ENCODE measurements at regions of chr2 and their contacts with region 1.

Region 1: DNA sequence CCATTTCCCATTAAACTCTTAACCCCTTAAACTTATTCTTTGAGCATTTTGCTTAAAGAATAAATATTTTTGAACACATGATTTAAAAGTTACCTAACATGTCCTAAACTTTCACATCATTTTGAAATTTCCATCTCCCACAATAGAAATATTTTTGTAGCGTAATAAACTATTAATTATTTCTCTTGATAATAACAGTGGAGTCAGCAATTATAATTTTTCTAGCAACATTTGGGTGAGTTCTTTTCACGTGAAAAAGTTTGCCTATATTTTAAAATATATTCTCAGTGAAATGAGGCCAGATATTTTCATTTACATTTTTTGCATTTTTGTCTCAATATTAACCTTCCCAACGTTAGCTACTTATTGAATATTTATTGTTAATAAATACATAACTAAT is 320.4 kb upstream of the CRIM1 start:
- DNase-seq: no peak
- H3K4me3 ChIP-seq: no peak overlapping the region
- H3K27ac ChIP-seq: no peak overlapping the region
- H3K4me1 ChIP-seq: no peaks in the 10 kb centered on the region
- H3K27me3 ChIP-seq: peaks cover 2% of the 10 kb centered on the region
- CTCF ChIP-seq: no peak

Region 2: DNA sequence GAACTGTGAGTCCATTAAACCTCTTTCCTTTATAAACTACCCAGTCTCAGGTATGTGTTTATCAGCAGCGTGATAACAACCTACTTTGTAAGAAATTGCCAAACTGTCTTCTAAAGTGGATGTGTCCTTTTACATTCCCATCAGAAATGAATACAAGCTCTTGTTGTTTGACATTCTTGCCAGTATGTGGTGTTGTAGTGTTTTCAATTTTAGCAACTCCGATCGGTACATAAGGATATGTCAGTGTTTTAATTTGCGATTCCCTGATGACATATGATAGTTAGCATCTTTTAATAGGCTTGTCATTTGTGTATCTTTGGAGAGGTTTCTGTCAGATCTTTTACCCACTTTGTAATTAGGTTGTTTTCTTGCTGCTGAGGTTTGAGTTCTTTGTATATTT is 835.8 kb before region 1 on chr2:
- CTCF ChIA-PET with region 1: interaction called, 12 read pairs
- dilution Hi-C with region 1: no loop called
- in situ Hi-C with region 1: no loop called
- intact Hi-C with region 1: no loop called
- DNase-seq: no peak
- H3K4me3 ChIP-seq: no peak overlapping the region
- H3K27ac ChIP-seq: no peak overlapping the region
- H3K4me1 ChIP-seq: no peaks in the 10 kb centered on the region
- H3K27me3 ChIP-seq: no peaks in the 10 kb centered on the region
- CTCF ChIP-seq: no peak

Region 3: GRCh38 chr2:35933031-35933430 is 102.1 kb before region 1 on chr2:
- CTCF ChIA-PET with region 1: no interaction called
- dilution Hi-C with region 1: no loop called
- in situ Hi-C with region 1: no loop called
- intact Hi-C with region 1: no loop called
- DNase-seq: peak; percentile 4
- H3K4me3 ChIP-seq: no peak overlapping the region
- H3K27ac ChIP-seq: no peak overlapping the region
- H3K4me1 ChIP-seq: no peaks in the 10 kb centered on the region
- H3K27me3 ChIP-seq: no peaks in the 10 kb centered on the region
- CTCF ChIP-seq: no peak

Region 4: GRCh38 chr2:36468463-36469105 is 433.4 kb after region 1 on chr2:
- CTCF ChIA-PET with region 1: no interaction called
- dilution Hi-C with region 1: no loop called
- in situ Hi-C with region 1: no loop called
- intact Hi-C with region 1: no loop called
- DNase-seq: peak; percentile 72
- H3K4me3 ChIP-seq: no peak overlapping the region
- H3K27ac ChIP-seq: peak overlapping the region; percentile 54
- H3K4me1 ChIP-seq: peaks cover 18% of the 10 kb centered on the region
- H3K27me3 ChIP-seq: no peaks in the 10 kb centered on the region
- CTCF ChIP-seq: no peak